ENCODE measurements at regions of chr11 and their contacts with region 1.

Region 1: GRCh38 chr11:45771566-45772448 is 33.1 kb upstream of the SLC35C1 start:
- DNase-seq: peak; percentile 94
- ATAC-seq: peak; percentile 95
- H3K4me3 Mint-ChIP-seq: peak overlapping the region; percentile 78
- H3K27ac Mint-ChIP-seq: peak overlapping the region; percentile 86
- H3K4me1 Mint-ChIP-seq: peaks cover 21% of the 10 kb centered on the region
- H3K27me3 Mint-ChIP-seq: peaks cover 2% of the 10 kb centered on the region

Region 2: GRCh38 chr11:45339729-45340519 is 431.9 kb before region 1 on chr11:
- CTCF ChIA-PET with region 1: interaction called, 17 read pairs
- POLR2A ChIA-PET with region 1: no interaction called
- intact Hi-C with region 1: loop called (anchors 1 kb)
- DNase-seq: peak; percentile 97
- ATAC-seq: peak; percentile 99
- H3K4me3 Mint-ChIP-seq: peak overlapping the region; percentile 55
- H3K27ac Mint-ChIP-seq: no peak overlapping the region
- H3K4me1 Mint-ChIP-seq: peaks cover 10% of the 10 kb centered on the region
- H3K27me3 Mint-ChIP-seq: peaks cover 4% of the 10 kb centered on the region

Region 3: GRCh38 chr11:45371251-45372115 is 400.3 kb before region 1 on chr11:
- CTCF ChIA-PET with region 1: interaction called, 34 read pairs
- POLR2A ChIA-PET with region 1: interaction called, 7 read pairs
- intact Hi-C with region 1: loop called (anchors 1 to 2 kb)
- DNase-seq: peak; percentile 84
- ATAC-seq: peak; percentile 76
- H3K4me3 Mint-ChIP-seq: no peak overlapping the region
- H3K27ac Mint-ChIP-seq: no peak overlapping the region
- H3K4me1 Mint-ChIP-seq: peaks cover 16% of the 10 kb centered on the region
- H3K27me3 Mint-ChIP-seq: peaks cover 10% of the 10 kb centered on the region

Region 4: DNA sequence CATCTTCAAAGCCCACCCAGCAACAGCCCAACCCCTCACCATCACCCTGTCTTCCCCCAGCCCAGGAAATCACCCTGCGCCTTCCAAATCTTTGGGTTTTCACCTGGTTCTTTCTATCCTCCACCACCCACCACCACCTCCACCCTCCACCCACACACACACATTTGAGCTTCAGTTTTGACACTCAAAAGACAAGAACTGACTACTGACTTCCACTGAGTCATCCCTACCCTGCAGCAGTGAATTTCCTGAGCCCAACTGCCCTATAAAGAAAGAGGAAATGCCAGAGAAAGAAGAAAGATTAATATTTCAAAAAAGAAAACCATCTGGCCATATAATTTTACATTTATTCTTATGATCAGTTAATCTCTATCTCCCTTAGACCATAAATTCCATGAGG is 243.9 kb before region 1 on chr11:
- CTCF ChIA-PET with region 1: no interaction called
- POLR2A ChIA-PET with region 1: no interaction called
- intact Hi-C with region 1: loop called in 1 of 2 experiments (anchors 10 kb)
- DNase-seq: peak; percentile 60
- ATAC-seq: peak; percentile 80
- H3K4me3 Mint-ChIP-seq: no peak overlapping the region
- H3K27ac Mint-ChIP-seq: peak overlapping the region; percentile 17
- H3K4me1 Mint-ChIP-seq: peaks cover 14% of the 10 kb centered on the region
- H3K27me3 Mint-ChIP-seq: peaks cover 4% of the 10 kb centered on the region

Region 5: GRCh38 chr11:45665206-45665932 is 106.4 kb before region 1 on chr11 and contains the start of gene CHST1:
- CTCF ChIA-PET with region 1: interaction called, 13 read pairs
- POLR2A ChIA-PET with region 1: no interaction called
- intact Hi-C with region 1: loop called (anchors 2 to 5 kb)
- DNase-seq: peak; percentile 56
- ATAC-seq: peak; percentile 43
- H3K4me3 Mint-ChIP-seq: peak within 1 kb of the TSS; percentile 47
- H3K27ac Mint-ChIP-seq: no peak within 1 kb of the TSS
- H3K4me1 Mint-ChIP-seq: peaks cover 5% of the 10 kb centered on the region
- H3K27me3 Mint-ChIP-seq: peaks cover 48% of the 10 kb centered on the region
- total RNA-seq, gene CHST1: 0.11 to 0.12 TPM

Region 6: GRCh38 chr11:45754261-45754709 is 17.5 kb before region 1 on chr11:
- CTCF ChIA-PET with region 1: interaction called, 21 read pairs
- POLR2A ChIA-PET with region 1: no interaction called
- intact Hi-C with region 1: no loop called
- DNase-seq: no peak
- ATAC-seq: no peak
- H3K4me3 Mint-ChIP-seq: no peak overlapping the region
- H3K27ac Mint-ChIP-seq: no peak overlapping the region
- H3K4me1 Mint-ChIP-seq: no peaks in the 10 kb centered on the region
- H3K27me3 Mint-ChIP-seq: peaks cover 13% of the 10 kb centered on the region

Region 7: GRCh38 chr11:45804761-45805304 is 33.0 kb after region 1 on chr11 and contains the start of gene SLC35C1:
- CTCF ChIA-PET with region 1: interaction called, 10 read pairs
- POLR2A ChIA-PET with region 1: no interaction called
- intact Hi-C with region 1: loop called in 1 of 2 experiments (anchors 1 kb)
- DNase-seq: peak; percentile 98
- ATAC-seq: peak; percentile 97
- H3K4me3 Mint-ChIP-seq: peak within 1 kb of the TSS; percentile 91
- H3K27ac Mint-ChIP-seq: peak within 1 kb of the TSS; percentile 86
- H3K4me1 Mint-ChIP-seq: peaks cover 42% of the 10 kb centered on the region
- H3K27me3 Mint-ChIP-seq: no peaks in the 10 kb centered on the region
- total RNA-seq, gene SLC35C1: 9.6 to 9.8 TPM

Region 8: DNA sequence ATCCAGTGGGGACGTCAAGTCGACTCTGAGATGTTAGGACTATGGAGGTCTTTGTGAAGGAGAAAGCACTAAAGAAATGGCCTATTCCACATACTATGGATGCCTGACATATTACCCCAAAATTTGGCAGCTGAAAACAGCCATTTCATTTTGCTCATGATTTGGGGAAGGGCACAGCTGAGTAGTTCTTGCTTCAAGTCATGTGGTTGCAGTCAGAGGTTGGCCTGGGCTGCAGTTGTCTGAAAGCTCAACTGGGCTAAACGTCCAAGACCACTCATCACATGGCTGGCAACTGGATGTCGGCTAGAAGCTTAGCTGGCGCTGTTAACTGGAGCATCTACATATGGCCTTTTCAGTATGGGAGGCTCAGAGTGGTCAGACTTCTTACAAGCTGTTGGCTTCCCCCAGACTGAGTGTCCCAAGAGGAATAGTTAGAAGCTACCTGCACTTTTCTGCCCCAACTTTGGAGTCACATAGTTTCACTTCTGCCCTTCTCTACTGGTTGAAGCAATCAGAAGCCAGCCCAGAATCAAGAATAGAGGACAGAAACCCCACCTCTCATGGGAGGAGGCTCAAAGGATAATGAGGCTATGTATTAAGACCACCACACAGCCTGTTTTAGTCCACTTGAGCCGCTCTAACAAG is 47.3 kb after region 1 on chr11:
- CTCF ChIA-PET with region 1: no interaction called
- POLR2A ChIA-PET with region 1: no interaction called
- intact Hi-C with region 1: no loop called
- DNase-seq: no peak
- ATAC-seq: no peak
- H3K4me3 Mint-ChIP-seq: no peak overlapping the region
- H3K27ac Mint-ChIP-seq: no peak overlapping the region
- H3K4me1 Mint-ChIP-seq: no peaks in the 10 kb centered on the region
- H3K27me3 Mint-ChIP-seq: no peaks in the 10 kb centered on the region

Region 9: DNA sequence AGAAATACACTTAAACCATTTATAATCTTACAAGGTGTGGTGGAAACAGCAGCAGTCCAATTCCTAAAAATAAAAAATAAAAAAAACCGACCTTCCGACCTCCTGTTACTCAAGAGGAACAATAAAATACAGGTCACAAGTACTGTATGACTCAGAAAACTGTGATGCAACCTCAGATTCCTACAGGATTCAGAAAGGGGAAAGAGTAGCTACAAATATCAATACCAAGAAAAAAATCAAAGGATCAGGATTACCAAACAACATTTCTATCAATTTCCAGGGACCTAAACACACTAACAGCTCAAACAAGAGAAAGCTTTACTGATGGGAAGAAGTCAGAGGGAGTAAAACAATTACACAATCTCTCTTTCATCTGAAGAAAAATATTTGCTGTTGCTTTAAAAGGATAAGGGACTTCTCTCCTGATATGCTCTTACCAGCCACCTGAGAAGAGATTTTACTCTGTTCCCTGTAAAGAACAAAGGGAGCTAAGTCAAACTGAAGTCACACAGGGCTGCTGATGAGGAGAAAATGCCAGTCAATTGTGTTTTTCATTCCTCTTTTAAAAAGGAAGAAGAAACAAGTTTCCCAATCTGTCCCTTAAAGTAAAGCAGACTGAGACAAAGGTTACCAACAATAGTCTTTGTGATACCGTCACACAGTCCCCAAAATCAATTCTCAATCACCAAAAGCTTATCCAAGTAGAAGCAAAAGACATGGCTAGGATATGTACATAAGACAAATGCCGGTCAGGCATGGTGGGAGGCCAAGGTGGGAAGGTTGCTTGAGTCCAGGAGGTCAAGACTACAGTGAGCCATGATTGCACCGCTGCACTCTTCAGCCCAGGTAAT is 782.6 kb after region 1 on chr11:
- CTCF ChIA-PET with region 1: no interaction called
- POLR2A ChIA-PET with region 1: no interaction called
- intact Hi-C with region 1: no loop called
- DNase-seq: no peak
- ATAC-seq: no peak
- H3K4me3 Mint-ChIP-seq: no peak overlapping the region
- H3K27ac Mint-ChIP-seq: peak overlapping the region; percentile 59
- H3K4me1 Mint-ChIP-seq: peaks cover 43% of the 10 kb centered on the region
- H3K27me3 Mint-ChIP-seq: no peaks in the 10 kb centered on the region